ENCODE measurements at regions of chr2 and their contacts with region 1.

Region 1: DNA sequence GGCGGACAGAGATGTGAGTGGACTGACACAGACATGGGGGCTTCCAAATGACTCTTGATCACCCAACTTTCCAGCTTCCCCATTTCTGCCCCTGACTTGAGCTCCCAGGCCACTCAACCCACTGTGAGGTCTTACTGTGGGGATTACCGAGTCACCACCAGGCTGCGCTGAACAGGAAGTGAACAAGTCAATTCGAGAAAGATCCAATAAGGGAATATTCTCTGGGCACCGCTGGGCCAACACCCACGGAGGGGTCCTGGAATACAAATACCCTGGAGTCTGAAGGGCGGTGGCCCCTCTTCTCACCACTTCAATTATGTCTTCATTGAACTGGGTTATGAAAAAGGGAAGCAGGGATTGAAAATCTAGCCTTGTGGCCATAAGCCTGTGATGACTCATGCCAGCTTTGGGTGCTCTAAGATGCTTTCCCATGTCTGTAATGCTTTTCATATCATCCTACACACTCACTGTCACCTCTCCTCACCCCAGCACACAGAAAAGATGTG is 37.7 kb downstream of the BCL11A start:
- DNase-seq: peak; percentile 75
- CTCF ChIP-seq: peak; percentile 3

Region 2: DNA sequence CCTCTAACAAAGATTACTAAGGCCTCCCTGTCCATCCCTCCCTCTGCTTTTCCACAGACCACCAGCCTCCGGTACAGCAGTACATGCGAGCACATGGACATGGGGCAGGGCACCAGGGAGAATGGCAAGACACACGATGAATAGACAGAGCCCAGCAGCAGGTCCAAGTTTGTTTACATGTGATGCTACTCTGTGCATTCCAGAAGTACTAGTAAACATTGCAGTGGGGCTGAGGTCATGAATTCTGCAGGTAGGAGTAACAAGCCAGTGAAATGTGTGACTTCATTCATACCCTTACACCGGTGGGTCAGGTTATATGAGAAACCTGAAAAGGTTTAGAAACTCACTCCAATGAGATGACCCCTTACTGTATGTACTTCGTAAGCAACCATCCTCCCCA is 168.0 kb before region 1 on chr2:
- CTCF ChIA-PET with region 1: no interaction called
- POLR2A ChIA-PET with region 1: no interaction called
- DNase-seq: no peak
- CTCF ChIP-seq: no peak

Region 3: DNA sequence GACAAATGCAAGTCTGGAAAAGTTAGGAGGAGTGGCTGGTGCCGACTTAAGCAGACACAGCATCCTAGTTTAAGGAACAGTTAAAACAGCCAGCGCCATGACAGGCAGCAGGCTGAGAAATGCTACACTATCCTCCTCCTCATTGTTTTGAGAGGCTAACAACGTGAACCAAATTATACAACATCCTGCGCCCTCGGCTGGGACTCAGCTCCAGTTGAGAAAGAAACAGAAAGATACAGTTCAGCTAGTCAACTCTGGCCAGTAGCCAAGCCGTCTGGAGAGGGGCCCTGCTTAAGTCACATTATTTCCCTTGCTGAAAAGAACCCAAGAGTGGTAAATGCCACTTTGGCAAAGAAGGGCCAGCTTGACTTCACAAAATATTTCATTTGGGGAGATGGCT is 52.5 kb before region 1 on chr2:
- CTCF ChIA-PET with region 1: no interaction called
- POLR2A ChIA-PET with region 1: no interaction called
- DNase-seq: no peak
- CTCF ChIP-seq: no peak

Region 4: DNA sequence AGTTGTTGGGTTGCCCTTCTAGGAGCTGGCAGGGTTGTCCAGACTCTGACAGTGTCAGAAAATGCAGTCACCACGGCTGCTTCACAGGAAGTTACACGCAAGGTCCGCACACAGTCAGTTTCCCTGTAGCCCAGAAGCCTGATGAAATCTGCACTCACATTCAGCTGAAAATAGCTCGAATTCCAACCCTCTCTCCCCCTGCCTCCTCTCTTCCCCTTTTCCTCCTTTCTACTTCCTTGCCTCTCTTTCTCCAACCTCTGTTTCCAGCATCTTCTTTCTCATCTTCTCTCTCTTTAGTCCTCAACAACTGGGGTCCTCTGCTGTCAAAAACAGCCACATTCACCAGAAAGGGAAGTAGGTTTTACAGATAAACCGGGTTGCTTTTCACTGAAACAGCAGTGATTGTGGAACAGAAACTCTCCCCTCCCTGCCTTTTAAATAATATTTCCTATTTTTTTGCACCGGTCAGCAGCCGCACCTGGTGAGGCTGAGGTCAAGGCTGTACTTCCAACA is 31.6 kb before region 1 on chr2:
- CTCF ChIA-PET with region 1: no interaction called
- POLR2A ChIA-PET with region 1: no interaction called
- DNase-seq: no peak
- CTCF ChIP-seq: no peak

Region 5: DNA sequence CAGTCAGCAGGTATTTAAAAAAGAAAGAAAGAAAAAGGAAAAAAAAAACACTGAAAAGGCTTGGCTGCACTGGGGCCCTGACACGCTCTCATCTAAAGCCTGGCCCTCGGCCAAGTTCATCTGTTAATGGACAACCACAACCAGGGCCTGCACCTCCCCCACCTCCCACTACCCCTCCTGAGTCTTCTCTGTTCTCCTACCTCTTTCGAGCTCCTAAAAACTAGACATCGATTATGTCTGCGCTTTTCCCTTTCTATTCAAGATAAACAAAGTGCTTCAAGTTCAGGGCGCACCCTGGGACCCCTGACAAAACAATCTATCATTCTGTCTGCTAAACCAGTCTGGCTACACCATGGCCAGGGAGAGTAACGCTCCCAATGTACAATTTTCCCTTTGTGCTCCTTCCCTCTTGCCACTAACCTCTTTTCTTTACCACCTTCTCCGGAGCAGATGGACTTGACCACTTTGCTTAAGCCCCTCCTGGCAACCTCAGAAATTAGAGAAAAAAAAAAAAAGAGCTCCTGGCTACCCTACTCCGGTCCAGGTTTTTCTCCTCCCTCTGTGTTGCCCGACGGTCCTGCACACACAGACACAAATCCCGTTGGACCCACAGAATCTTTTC is 15.0 kb after region 1 on chr2:
- CTCF ChIA-PET with region 1: interaction called, 15 read pairs
- POLR2A ChIA-PET with region 1: no interaction called
- DNase-seq: peak; percentile 59
- CTCF ChIP-seq: no peak

Region 6: DNA sequence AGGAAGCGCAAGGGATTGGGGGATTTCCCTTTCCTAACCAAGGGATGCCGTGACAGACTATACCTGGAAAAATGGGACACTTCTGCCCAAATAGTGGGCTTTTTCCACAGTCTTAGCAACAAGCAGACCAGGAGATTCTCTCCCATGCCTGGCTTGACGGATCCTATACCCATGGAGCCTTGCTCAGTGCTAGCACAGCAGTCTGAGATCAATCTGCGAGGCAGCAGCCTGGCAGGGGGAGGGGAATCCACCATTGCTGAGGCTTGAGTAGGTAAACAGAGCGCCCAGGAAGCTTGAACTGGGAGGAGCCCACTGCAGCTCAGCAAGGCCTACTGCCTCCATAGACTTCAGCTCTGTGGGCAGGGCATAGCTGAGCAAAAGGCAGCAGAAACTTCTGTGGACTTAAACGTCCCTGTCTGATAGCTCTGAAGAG is 505.5 kb after region 1 on chr2:
- CTCF ChIA-PET with region 1: no interaction called
- POLR2A ChIA-PET with region 1: no interaction called
- DNase-seq: no peak
- CTCF ChIP-seq: no peak

Measured in GM10248 (cell line).